Heart right ventricle (tissue), 16 donors: ENCODE measurements at regions of chr2 and their contacts with region 1.

Region 1: DNA sequence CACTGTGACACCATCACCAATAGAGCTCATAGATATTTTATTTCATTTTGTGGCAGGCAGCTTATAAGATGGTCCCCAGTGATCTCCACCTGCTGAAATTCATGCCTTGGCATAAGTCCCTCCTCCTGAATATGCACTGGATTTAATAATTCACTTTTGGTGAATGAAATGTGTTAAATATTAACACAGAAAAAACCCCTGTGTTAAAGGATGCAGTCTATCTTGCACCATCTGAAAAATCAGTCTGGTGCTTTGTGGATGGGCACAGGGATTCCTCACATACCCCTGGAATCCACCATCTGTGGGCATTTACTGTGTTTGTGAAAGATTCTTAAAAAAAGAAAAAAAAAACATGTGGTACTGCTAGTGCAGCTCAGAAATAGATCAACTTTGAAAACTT is 26.1 kb upstream of the WIPF1 start:
- DNase-seq: no peak
- ATAC-seq: no peak
- H3K4me3 ChIP-seq: no peak overlapping the region
- H3K27ac ChIP-seq: no peak overlapping the region
- H3K4me1 ChIP-seq: peaks cover 0 to 15% (median 0%) of the 10 kb centered on the region in 9 donors
- H3K27me3 ChIP-seq: no peaks in the 10 kb centered on the region
- CTCF ChIP-seq: no peak

Region 2: DNA sequence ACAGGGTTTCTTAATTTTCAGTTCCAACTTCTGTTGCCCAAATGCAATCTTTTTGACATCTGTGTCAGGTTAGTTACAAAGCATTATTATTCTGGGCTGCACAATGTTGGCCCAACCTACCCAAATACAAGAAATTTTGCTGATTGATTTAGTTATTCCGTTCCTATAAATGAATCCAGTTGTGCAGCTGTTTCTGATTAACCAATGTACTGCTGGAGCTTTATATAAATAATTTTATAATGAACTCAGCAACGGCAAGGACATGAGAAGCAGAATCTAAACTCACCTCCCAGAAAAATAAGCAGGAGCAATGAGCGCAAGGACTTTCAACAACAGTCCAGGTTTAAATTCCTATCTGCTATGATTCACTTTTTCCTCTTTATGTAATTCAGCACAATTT is 50.2 kb after region 1 on chr2:
- intact Hi-C with region 1: loop called in 1 of 10 experiments (anchors 10 kb)
- DNase-seq: no peak
- ATAC-seq: no peak
- H3K4me3 ChIP-seq: no peak overlapping the region
- H3K27ac ChIP-seq: no peak overlapping the region
- H3K4me1 ChIP-seq: peaks cover 0 to 30% (median 22%) of the 10 kb centered on the region in 9 donors
- H3K27me3 ChIP-seq: no peaks in the 10 kb centered on the region
- CTCF ChIP-seq: no peak

Region 3: DNA sequence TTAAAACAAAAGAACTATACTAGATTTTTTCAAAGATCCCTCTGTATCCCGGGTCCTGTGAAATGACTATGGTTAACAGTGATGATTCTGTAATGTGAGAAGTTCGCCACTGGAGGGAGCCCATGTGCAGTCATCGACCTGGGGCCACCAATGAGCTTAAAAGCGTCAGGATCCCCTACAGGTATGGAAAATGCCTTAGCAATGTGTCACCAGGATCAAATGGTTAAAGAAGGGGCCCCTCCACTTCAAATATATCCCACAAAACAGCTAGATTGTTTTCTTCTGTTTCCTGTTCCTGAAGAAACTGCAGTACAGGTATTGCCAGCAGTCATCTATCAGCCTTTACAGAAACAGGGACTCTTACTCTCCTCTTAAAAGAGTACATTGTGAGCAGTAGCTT is 125.3 kb after region 1 on chr2:
- intact Hi-C with region 1: no loop called
- DNase-seq: peak; percentile 24 to 61
- ATAC-seq: peak in 5 of 8 donors; percentile 48 to 79 (median 74)
- H3K4me3 ChIP-seq: no peak overlapping the region
- H3K27ac ChIP-seq: no peak overlapping the region
- H3K4me1 ChIP-seq: peaks cover 0 to 10% (median 0%) of the 10 kb centered on the region in 9 donors
- H3K27me3 ChIP-seq: peaks cover 0 to 6% (median 0%) of the 10 kb centered on the region in 7 donors
- CTCF ChIP-seq: peak; percentile 57 to 88 (median 81)